HepG2 (cell line): ENCODE measurements at regions of chr7 and their contacts with region 1.

Region 1: GRCh38 chr7:101882595-101883564 is 65.5 kb downstream of the CUX1 start:
- DNase-seq: peak; percentile 99
- ATAC-seq: peak; percentile 97
- H3K4me3 ChIP-seq: peak overlapping the region; percentile 34 to 64 (median 36); a peak in 5 of 6 replicates
- H3K27ac ChIP-seq: peak overlapping the region; percentile 96
- H3K4me1 ChIP-seq: peaks cover 66% of the 10 kb centered on the region
- H3K27me3 ChIP-seq: no peaks in the 10 kb centered on the region
- CTCF ChIP-seq: peak; percentile 67
- EP300 ChIP-seq: peak; percentile 63 to 66; a peak in 2 of 4 replicates
- POLR2A ChIP-seq: peak; percentile 37 to 70; a peak in 3 of 4 replicates
- RAD21 ChIP-seq: peak; percentile 49

Region 2: DNA sequence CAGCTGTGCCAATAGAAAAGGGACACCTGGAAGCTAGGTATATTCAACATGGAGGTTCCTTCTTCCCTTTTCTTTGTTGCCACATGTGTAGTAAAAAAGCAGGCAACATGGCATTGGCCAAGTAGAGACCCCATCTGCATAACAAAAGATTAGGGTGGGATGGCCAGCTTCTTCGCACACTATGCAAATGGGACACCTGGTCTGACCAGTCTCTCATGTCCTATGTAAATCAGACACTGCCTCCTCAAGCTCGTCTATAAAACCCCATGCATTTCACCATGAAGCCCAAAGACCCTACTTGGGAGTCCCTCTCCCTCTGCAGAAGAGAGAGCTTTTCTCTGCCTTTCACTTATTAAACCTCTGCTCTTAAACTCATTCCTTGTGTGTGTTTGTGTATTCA is 307.7 kb before region 1 on chr7:
- CTCF ChIA-PET with region 1: no interaction called
- POLR2A ChIA-PET with region 1: no interaction called
- in situ Hi-C with region 1: no loop called
- intact Hi-C with region 1: no loop called
- DNase-seq: no peak
- ATAC-seq: no peak
- H3K4me3 ChIP-seq: no peak overlapping the region
- H3K27ac ChIP-seq: no peak overlapping the region
- H3K4me1 ChIP-seq: no peaks in the 10 kb centered on the region
- H3K27me3 ChIP-seq: no peaks in the 10 kb centered on the region
- CTCF ChIP-seq: no peak
- EP300 ChIP-seq: no peak
- POLR2A ChIP-seq: no peak
- RAD21 ChIP-seq: no peak

Region 3: DNA sequence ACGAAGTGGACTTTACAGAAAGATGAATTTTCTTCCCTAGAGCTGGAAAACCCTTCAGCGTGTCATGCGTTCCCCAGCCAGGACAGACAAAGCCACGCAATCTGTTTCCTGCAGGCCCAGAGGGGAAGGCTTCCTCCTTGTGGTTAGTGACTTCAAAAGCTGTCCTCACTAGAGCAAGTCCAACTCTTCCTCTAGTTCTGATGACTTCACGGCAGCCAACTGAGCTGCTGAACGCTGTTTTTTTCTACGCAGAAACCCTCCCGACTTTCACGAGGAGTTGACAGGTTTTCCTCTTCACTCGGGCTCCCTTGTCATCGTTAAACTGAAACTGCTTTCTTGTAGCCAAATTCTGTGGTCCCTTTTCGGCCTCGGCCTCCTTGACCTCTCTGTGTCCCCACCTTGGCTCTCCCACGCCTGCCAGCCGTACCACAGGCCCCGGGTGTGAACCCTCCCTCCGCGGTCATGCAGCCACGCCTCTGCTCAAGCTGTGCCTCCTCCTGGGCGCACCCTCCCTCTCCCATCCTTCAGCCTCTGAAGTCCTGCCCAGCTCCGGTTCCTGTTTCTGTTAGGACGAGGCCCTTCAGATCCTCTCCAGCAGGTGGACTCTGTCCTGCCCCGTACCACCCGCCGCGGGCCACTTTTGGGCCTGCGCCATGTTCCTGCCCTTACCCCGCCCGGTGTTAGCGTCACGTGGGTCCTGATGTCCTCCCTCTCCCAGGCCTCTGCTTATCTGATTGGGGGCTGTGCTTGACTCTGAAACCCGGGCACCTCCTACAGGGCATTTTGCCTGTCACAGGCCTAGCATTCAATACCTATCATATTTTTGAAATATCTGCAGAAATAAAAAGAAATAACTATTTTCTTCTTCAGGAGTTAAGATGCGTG is 26.2 kb before region 1 on chr7:
- CTCF ChIA-PET with region 1: interaction called, 3 read pairs
- POLR2A ChIA-PET with region 1: interaction called, 9 read pairs
- in situ Hi-C with region 1: no loop called
- intact Hi-C with region 1: loop called (anchors 2 kb)
- DNase-seq: peak; percentile 95
- ATAC-seq: peak; percentile 96
- H3K4me3 ChIP-seq: peak overlapping the region; percentile 34 to 68 (median 43); a peak in 5 of 6 replicates
- H3K27ac ChIP-seq: peak overlapping the region; percentile 78
- H3K4me1 ChIP-seq: peaks cover 67% of the 10 kb centered on the region
- H3K27me3 ChIP-seq: no peaks in the 10 kb centered on the region
- CTCF ChIP-seq: peak; percentile 77
- EP300 ChIP-seq: no peak
- POLR2A ChIP-seq: peak in 1 of 2 experiments; percentile 43; a peak in 2 of 4 replicates
- RAD21 ChIP-seq: peak; percentile 62

Region 4: GRCh38 chr7:102008535-102009345 is 125.9 kb after region 1 on chr7:
- CTCF ChIA-PET with region 1: no interaction called
- POLR2A ChIA-PET with region 1: no interaction called
- in situ Hi-C with region 1: no loop called
- intact Hi-C with region 1: loop called (anchors 10 kb)
- DNase-seq: no peak
- ATAC-seq: peak; percentile 58
- H3K4me3 ChIP-seq: no peak overlapping the region
- H3K27ac ChIP-seq: peak overlapping the region; percentile 44
- H3K4me1 ChIP-seq: peaks cover 41% of the 10 kb centered on the region
- H3K27me3 ChIP-seq: no peaks in the 10 kb centered on the region
- CTCF ChIP-seq: no peak
- EP300 ChIP-seq: no peak
- POLR2A ChIP-seq: no peak
- RAD21 ChIP-seq: no peak